ENCODE measurements at regions of chr10 and their contacts with region 1.

Region 1: GRCh38 chr10:14678637-14679036 is 96.1 kb downstream of the FAM107B start:
- DNase-seq: peak; percentile 30
- H3K4me3 Mint-ChIP-seq: no peak overlapping the region
- H3K27ac Mint-ChIP-seq: peak overlapping the region; percentile 40
- H3K4me1 Mint-ChIP-seq: peaks cover 11% of the 10 kb centered on the region
- H3K27me3 Mint-ChIP-seq: no peaks in the 10 kb centered on the region

Region 2: DNA sequence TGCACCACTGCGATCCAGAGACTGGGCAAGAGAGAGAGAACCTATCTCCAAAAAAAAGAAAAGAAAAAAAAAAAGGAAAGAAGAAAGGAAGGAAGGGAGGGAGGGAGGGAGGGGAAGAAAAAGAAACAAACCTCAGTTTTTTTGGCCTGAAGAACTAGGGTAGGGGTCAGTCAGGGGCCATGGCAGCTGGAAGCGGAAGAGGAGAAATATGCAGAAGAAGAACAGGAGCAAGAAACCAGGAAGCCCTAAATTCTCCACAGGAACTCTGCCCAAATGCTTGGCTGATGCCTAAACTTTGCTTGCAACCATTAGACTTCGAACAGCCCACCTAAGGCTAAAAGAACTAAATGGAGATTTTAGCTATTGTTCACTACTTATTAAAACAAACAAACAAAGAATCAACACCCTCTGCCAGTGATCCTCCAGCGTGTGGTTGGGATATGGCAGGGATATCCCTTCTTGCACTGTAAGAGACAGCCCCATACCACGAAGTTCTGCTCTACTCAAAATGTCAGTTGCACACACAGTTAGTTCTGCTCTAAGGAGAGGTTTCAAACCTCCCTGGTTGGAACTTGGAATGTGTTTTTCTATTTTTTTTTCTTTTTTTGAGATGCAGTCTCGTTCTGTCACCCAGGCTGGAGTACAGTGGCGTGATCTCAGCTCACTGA is 43.5 kb before region 1 on chr10:
- CTCF ChIA-PET with region 1: no interaction called
- POLR2A ChIA-PET with region 1: no interaction called
- intact Hi-C with region 1: no loop called
- DNase-seq: no peak
- H3K4me3 Mint-ChIP-seq: no peak overlapping the region
- H3K27ac Mint-ChIP-seq: no peak overlapping the region
- H3K4me1 Mint-ChIP-seq: peaks cover under 1% of the 10 kb centered on the region
- H3K27me3 Mint-ChIP-seq: no peaks in the 10 kb centered on the region

Region 3: GRCh38 chr10:14665304-14665703 is 13.3 kb before region 1 on chr10:
- CTCF ChIA-PET with region 1: no interaction called
- POLR2A ChIA-PET with region 1: interaction called, 3 read pairs
- intact Hi-C with region 1: loop called (anchors 1 kb)
- DNase-seq: peak; percentile 40
- H3K4me3 Mint-ChIP-seq: no peak overlapping the region
- H3K27ac Mint-ChIP-seq: peak overlapping the region; percentile 56
- H3K4me1 Mint-ChIP-seq: peaks cover 45% of the 10 kb centered on the region
- H3K27me3 Mint-ChIP-seq: no peaks in the 10 kb centered on the region